ENCODE measurements at regions of chr11 and their contacts with region 1.

Region 1: DNA sequence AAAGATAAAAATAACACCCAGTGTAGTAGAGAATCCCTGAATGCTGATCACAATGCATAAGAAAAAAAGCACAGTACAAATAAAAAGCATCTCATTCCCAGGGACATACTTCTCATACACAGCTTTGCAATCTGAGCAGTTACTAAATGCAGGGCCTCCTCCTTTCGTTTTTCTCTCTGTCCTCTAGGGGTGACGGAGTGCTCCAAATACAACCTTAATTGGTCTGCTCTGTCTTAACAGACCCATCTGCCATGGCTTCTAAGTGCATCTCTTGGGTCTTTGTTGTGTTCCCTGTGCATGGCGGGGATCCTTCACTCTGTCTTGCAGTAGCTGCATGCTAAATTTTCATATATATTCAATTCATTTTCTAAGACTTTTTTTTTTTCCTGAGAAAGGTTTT is 1114.2 kb upstream of the RAG2 start:
- DNase-seq: no peak
- H3K4me3 ChIP-seq: no peak overlapping the region
- H3K27ac ChIP-seq: no peak overlapping the region
- H3K4me1 ChIP-seq: no peaks in the 10 kb centered on the region
- H3K27me3 ChIP-seq: no peaks in the 10 kb centered on the region
- CTCF ChIP-seq: no peak; the same call in 1 of the 2 replicates

Region 2: DNA sequence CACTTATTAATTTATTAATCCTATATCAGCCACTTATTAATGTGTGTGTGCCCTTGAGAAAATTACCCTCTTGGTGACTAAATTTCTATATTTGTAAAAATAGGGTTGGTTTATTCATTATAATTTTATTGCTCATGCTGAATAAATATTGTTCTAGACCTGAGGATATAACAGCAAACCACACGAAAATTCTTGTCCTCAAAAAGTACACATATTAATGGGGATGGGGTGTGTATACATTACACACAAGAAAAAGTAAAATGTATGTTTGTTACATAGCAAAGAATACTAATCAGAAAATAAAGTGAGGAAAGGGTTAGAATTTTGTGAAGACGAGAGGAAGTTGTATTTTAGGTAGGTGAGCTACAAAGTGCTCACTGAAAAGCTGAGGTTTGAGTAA is 45.3 kb before region 1 on chr11:
- CTCF ChIA-PET with region 1: no interaction called
- POLR2A ChIA-PET with region 1: interaction called, 12 read pairs
- intact Hi-C with region 1: no loop called
- DNase-seq: no peak
- H3K4me3 ChIP-seq: no peak overlapping the region
- H3K27ac ChIP-seq: no peak overlapping the region
- H3K4me1 ChIP-seq: no peaks in the 10 kb centered on the region
- H3K27me3 ChIP-seq: no peaks in the 10 kb centered on the region
- CTCF ChIP-seq: no peak

Region 3: GRCh38 chr11:38305682-38306081 is 593.4 kb after region 1 on chr11:
- CTCF ChIA-PET with region 1: no interaction called
- POLR2A ChIA-PET with region 1: no interaction called
- intact Hi-C with region 1: no loop called
- DNase-seq: no peak
- H3K4me3 ChIP-seq: no peak overlapping the region
- H3K27ac ChIP-seq: no peak overlapping the region
- H3K4me1 ChIP-seq: no peaks in the 10 kb centered on the region
- H3K27me3 ChIP-seq: no peaks in the 10 kb centered on the region
- CTCF ChIP-seq: no peak